Ascending aorta (tissue), 2 donors: ENCODE measurements at regions of chr9 and their contacts with region 1.

Region 1: DNA sequence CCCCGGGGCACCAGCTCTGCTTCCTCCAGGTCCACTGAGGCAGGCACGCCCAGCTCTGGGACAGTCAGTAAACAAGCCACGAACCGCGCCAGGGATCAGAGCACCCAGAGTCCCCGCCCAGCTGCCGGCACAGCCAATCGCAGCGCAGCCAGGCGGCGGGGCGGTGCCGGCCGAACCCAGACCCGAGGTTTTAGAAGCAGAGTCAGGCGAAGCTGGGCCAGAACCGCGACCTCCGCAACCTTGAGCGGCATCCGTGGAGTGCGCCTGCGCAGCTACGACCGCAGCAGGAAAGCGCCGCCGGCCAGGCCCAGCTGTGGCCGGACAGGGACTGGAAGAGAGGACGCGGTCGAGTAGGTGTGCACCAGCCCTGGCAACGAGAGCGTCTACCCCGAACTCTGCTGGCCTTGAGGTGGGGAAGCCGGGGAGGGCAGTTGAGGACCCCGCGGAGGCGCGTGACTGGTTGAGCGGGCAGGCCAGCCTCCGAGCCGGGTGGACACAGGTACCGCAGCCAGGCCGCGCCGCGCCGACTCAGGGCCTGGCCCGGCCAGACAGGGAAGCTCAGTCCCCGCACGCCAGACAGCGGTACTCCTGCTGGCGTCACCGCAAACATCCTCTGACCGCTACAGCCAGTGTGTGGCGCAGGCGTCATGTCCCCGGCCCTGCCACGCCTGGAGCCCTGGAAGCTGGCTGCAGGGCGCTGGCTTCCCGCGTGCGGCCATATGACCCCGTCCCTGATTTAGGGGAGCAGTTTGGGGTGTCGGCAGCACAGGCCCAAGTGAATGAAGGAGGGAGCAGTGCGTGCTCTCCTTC is at the start of gene CTSL:
- DNase-seq: peak; percentile 75 to 96
- H3K4me3 ChIP-seq: peak within 1 kb of the TSS; percentile 73 to 76
- H3K27ac ChIP-seq: peak within 1 kb of the TSS; percentile 95 to 98
- H3K4me1 ChIP-seq: peaks cover 6 to 10% of the 10 kb centered on the region in 2 donors
- H3K27me3 ChIP-seq: no peaks in the 10 kb centered on the region
- CTCF ChIP-seq: peak in 1 of 3 experiments; percentile 25
- total RNA-seq, gene CTSL: 97.8 TPM

Region 2: GRCh38 chr9:86354011-86354817 is 1371.9 kb before region 1 on chr9 and contains the start of gene TUT7:
- intact Hi-C with region 1: loop called (anchors 10 kb)
- DNase-seq: peak; percentile 81 to 97
- H3K4me3 ChIP-seq: peak within 1 kb of the TSS; percentile 93 to 99
- H3K27ac ChIP-seq: peak within 1 kb of the TSS; percentile 97 to 100
- H3K4me1 ChIP-seq: peaks cover 3 to 16% of the 10 kb centered on the region in 2 donors
- H3K27me3 ChIP-seq: no peaks in the 10 kb centered on the region
- CTCF ChIP-seq: no peak
- total RNA-seq, gene TUT7: 12.9 TPM

Region 3: DNA sequence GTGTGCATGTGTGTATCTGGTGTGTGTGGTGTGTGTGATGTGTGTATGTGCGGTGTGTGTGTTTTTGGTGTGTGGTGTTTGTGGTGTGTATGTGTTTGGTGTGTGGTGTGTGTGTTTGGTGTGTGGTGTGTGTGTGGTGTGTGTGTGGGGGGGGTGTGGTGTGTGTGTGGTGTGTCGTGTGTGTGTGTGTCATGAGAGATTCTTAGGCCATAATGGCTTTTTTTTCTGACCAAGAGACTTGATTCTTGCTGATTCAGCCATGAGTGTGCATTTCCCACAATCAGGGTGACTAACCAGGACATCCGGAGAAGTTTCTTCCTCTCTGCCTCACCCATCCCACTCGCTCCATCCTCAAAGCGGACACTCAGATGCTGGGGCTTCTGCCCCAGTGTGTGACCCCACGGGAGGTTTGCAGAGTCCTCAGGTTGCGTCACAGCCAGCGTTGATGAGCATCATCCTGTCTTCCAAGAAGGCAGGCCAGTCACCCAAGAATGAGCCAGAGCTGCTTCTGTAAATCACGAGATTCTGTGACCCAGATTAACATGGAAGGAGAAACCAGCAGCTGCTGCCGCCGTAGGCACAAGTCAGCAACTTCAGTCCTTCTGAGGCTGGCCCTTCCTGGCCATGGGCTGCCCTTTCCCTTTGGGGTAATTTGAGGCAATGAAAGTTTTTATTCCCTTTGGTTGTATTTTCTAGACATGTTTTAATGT is 12.7 kb before region 1 on chr9:
- intact Hi-C with region 1: loop called (anchors 1 kb)
- DNase-seq: peak; percentile 82 to 95
- H3K4me3 ChIP-seq: peak overlapping the region in 1 of 2 donors; percentile 33
- H3K27ac ChIP-seq: peak overlapping the region; percentile 64 to 78
- H3K4me1 ChIP-seq: peaks cover 0 to 14% of the 10 kb centered on the region in 2 donors
- H3K27me3 ChIP-seq: no peaks in the 10 kb centered on the region
- CTCF ChIP-seq: peak in 1 of 3 experiments; percentile 15

Region 4: GRCh38 chr9:87798261-87798833 is 72.2 kb after region 1 on chr9:
- intact Hi-C with region 1: no loop called
- DNase-seq: no peak
- H3K4me3 ChIP-seq: no peak overlapping the region
- H3K27ac ChIP-seq: no peak overlapping the region
- H3K4me1 ChIP-seq: no peaks in the 10 kb centered on the region
- H3K27me3 ChIP-seq: no peaks in the 10 kb centered on the region
- CTCF ChIP-seq: no peak

Region 5: DNA sequence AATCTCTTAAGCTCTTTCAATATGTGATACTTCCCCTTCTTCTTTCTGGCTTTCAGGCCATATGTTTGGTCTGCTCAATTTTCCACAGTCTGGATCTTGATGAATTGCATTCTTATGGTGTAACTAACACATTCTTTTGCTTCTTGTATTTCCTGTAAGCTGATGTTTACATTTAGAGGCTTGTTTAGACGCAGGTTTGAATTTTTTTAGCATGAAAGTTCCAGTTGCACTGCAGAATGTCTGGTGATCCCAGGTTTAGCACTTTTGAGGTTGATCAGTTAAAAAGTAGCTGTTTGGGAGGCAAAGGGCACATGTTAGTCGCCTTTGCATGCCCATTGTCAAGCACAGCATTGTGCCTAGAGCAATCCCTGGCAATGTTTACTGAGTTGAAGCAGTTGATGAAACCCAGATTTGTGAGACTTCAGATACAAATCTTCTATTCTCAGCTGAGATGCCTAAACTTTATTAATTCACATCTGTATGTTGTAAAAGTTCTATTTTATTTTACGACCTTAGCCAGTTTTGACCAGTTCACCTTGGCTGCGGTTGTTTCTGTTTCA is 471.8 kb after region 1 on chr9:
- intact Hi-C with region 1: loop called (anchors 5 kb)
- DNase-seq: no peak
- H3K4me3 ChIP-seq: peak overlapping the region; percentile 26 to 53
- H3K27ac ChIP-seq: peak overlapping the region in 1 of 2 donors; percentile 45
- H3K4me1 ChIP-seq: peaks cover 0 to 6% of the 10 kb centered on the region in 2 donors
- H3K27me3 ChIP-seq: no peaks in the 10 kb centered on the region
- CTCF ChIP-seq: no peak

Region 6: DNA sequence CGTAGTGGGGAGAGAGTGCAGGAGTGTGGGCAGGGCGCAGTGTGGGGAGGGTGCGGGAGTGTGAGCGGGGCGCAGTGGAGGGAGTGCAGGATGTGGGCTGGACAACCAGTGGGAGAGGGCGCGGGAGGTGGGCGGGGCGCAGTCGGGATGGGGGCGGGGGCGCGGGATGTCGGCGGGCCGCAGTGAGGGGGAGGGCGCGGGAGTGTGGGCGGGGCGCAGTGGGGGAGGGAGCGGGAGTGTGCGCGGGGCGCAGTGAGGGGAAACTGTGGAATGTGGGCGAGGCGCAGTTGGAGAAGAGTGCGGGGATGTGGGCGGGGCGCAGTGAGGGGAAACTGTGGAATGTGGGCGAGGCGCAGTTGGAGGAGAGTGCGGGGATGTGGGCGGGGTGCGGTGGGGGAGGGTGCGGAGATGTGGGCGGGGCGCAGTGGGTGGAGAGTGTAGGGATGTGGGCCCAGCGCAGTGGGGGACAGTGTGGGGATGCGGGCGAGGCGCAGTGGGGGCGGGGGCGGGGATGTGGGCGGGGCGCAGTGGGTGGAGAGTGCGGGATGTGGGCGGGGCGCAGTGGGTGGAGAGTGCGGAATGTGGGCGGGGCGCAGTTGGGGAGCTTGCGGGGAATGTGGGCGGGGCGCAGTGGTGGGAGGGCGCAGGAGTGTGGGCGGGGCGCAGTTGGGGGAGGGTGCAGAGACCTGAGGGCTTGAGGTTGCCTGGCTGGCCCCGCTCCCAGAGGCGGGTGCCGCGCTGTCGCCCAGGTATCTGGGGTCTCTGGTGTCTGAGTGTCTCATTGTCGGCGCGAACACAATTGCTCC is 808.6 kb after region 1 on chr9 and contains the start of gene NXNL2:
- intact Hi-C with region 1: loop called (anchors 5 kb)
- DNase-seq: peak in 1 of 2 donors; percentile 88
- H3K4me3 ChIP-seq: peak within 1 kb of the TSS; percentile 59 to 94
- H3K27ac ChIP-seq: peak within 1 kb of the TSS; percentile 93
- H3K4me1 ChIP-seq: peaks cover 6 to 12% of the 10 kb centered on the region in 2 donors
- H3K27me3 ChIP-seq: no peaks in the 10 kb centered on the region
- CTCF ChIP-seq: no peak
- total RNA-seq, gene NXNL2: not detected

Region 7: GRCh38 chr9:89318123-89319014 is 1592.3 kb after region 1 on chr9 and contains the start of gene SECISBP2:
- intact Hi-C with region 1: loop called (anchors 5 kb)
- DNase-seq: peak; percentile 89 to 98
- H3K4me3 ChIP-seq: peak within 1 kb of the TSS; percentile 74 to 89
- H3K27ac ChIP-seq: peak within 1 kb of the TSS; percentile 98 to 100
- H3K4me1 ChIP-seq: peaks cover 10 to 27% of the 10 kb centered on the region in 2 donors
- H3K27me3 ChIP-seq: no peaks in the 10 kb centered on the region
- CTCF ChIP-seq: peak in 2 of 3 experiments; percentile 60 to 69
- total RNA-seq, gene SECISBP2: 27.8 TPM